ENCODE measurements at regions of chr1 and their contacts with region 1.

Region 1: DNA sequence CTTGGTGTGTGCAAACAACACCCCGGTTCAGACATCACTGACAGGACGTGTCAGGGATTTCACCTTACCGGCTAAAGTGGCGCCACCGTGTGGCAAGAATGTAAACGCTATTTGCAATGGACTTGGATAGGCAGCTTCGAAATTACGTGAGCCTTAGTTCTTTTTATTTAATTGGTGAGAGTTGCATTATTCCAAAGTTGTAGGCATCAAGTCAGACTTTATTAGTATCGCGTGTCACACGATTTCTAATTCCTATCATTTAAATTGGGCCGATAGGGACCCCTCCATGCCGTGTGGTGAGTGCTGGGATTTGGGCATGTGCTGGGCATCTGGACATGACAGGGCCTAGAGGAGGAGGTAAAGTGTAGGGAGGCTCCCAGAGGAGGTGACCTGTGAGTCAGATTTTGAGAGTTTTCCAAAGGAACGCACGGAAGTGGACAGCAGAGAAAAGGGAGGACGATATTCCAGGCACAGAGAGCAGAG is 14.5 kb upstream of the CPT2 start:
- DNase-seq: peak; percentile 84
- ATAC-seq: peak; percentile 53 to 64

Region 2: GRCh38 chr1:52702886-52703787 is 479.0 kb before region 1 on chr1:
- intact Hi-C with region 1: loop called in 1 of 2 experiments (anchors 10 kb)
- DNase-seq: peak; percentile 91
- ATAC-seq: peak; percentile 92 to 93

Region 3: DNA sequence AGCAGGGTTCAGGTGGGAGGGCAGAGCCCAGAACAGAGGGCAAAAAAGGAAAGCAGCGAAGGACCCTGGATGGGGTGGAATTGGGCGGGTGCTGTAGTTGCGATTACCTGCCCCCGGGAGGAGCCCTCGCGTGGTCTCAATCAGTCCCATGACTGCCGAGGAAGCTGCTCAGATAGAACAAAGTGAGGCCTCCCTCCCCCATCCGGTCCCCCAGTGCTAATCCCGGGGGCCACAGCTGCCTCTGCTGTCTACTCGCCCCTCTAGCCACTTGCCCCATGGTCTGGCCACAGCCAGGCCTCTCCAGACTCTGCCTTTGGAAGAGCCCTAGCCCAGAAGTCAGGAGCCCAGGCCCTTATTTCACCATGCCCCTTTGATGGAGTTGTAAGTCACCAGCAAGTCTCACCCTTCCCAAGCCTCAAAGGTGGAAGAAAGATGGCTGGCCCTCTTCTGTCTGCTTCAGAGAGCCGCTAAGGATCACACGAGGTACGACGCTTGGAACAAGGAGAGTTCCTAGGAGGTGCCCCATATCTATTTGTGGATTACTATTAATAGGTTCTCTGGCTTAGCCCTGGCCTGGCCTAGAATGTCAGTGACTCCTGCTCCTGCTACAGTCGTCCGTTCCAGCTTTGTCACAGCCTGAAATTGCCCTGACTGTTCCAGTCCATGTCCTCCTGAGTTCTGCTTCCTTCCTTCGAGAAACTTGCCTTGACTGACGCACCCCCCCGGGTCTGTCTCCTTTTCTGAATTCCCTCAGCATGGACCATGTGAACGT is 277.0 kb before region 1 on chr1:
- intact Hi-C with region 1: loop called in 1 of 2 experiments (anchors 5 kb)
- DNase-seq: peak; percentile 34
- ATAC-seq: peak; percentile 87 to 90

Region 4: DNA sequence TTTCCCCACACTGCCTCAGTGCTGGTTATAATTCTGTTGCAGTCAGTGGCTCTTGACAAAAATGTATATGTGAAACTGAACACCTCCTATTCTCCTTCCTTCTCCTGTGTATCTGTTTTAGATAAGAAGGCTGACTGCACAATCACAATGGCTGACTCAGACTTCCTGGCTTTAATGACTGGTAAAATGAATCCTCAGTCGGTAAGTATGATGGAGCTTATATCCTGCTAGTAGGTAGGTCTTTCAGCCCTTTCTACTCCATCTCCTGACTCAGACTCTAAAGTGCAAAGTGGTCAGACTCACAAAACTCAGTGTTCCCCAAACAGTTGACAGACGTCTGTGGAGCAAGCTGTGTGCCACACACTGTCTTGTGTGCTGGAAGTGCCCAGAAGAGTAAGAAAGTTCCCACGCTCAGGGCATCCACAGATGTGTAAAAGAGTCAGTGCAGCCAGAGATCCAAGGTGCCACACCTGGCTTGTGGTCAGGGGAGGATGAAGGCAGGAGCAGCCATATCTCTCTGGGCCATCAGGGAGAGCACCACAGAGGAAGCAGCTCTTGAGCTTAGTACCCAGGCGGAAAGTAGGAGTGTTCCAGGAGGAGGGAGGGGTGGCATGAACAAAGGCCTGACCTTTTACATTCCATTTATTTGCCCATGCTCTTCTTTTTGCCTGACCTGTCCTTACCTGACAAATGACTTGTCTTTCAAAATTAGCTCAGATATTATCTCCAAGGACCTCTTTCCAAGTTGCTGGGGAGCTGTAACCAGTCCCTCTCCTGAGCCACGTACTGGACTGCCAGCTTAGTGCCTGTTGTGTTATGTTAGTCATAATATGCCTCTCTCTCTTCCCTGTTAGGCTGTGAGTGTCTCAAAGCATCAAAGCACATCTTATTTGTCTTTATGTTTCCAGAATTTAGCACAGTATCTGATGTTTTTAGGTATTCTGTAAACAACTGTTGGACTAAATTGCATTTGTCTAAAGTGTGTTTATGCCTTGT is 134.1 kb before region 1 on chr1:
- intact Hi-C with region 1: no loop called
- DNase-seq: no peak
- ATAC-seq: peak in 1 of 2 donors; percentile 73